HEK293 (cell line): ENCODE measurements at regions of chr12 and their contacts with region 1.

Region 1: DNA sequence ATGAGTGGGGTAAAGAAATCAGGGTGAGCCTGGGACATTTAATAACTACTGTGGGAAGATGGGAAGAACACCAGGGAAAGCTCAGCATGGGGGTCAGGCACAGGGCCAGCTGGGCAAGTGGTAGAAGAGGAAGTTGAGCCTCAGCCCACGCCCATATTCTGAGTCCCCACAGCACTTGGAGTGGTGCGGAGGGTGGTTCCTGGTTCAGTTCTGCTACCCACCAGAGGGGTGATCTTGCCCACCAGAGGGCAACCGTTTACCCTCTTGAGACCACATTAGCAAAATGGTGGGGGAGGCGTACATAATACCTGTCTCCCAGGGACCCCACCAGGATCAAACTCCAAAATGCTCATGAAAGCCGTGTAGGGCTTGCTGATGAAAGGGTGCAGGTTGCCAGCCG is 16.8 kb upstream of the ANKRD33 start:
- H3K4me3 ChIP-seq: no peak overlapping the region
- H3K27ac ChIP-seq: no peak overlapping the region
- H3K4me1 ChIP-seq: no peaks in the 10 kb centered on the region
- CTCF ChIP-seq: no peak

Region 2: DNA sequence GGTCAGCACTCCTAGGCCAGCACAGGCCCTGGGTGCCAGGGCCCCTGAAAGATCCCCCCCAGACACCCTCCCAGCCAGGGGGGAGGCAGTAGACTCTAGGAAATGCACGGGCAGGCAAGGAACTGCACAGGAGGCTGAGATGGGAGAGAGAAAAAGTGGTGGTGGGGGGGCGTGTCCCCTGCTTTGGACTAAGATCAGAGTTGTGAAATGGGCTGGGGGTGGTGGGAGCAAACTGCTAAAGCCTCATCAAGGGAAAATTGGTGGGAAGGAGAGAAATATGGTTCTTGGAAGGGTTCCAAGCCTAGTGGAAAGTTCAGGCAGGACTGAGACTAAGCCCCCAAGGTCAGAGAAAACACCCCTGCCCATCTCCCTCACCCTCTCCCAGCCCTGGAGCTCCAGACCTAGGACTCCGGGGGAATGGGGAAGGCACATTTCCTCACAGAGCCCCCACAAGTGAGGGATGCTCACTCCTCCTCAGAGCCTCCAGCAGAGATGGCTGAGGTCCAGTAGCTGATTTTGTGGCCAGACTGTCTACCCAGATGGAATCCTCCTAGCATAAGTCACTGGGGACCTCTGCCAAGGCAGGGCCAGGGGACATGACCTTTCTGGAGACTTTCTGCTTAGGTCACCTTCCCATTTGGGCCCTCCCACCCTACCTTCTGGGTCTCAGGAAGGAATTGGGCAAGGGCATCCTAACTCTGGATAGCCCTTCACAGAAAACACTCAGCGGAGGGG is 52.4 kb before region 1 on chr12:
- CTCF ChIA-PET with region 1: interaction called, 41 read pairs
- POLR2A ChIA-PET with region 1: no interaction called
- H3K4me3 ChIP-seq: no peak overlapping the region
- H3K27ac ChIP-seq: no peak overlapping the region
- H3K4me1 ChIP-seq: no peaks in the 10 kb centered on the region
- CTCF ChIP-seq: no peak

Region 3: DNA sequence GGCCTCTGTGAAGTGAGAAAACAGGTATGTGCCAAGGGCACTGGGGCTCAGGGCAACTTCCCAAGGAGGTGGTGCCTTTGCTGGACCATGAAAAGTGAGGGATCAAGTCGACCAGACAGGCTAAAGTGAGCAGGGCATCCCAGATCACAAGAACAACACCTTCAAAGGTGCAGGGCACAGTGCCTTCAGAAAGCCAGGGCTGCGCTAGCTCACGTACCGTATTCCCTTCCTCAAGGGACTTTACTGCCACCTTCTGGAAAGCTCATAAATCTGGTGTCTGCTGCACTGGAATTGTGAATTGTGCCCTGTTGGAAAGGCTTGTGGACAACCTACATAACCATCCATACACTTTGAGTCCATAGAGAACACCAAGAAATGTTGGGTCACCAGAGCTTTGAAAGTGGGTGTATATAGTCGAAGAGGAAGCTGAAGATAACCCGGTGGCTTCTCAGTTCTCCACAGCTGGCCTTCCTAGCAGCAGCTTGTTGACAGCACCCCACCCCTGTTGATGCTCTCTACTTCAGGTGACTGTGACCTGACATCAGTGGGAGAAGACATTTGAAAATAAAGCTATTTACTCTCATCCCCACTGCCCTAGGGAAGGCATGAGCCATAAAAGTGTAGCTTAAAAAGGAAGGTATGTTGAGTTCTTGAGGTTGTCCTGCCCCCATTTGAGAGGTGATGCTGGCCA is 47.1 kb before region 1 on chr12:
- CTCF ChIA-PET with region 1: interaction called, 41 read pairs
- POLR2A ChIA-PET with region 1: no interaction called
- H3K4me3 ChIP-seq: no peak overlapping the region
- H3K27ac ChIP-seq: no peak overlapping the region
- H3K4me1 ChIP-seq: no peaks in the 10 kb centered on the region
- CTCF ChIP-seq: peak; percentile 52; the same call in 1 of the 2 replicates

Region 4: GRCh38 chr12:51886021-51886322 is 14.8 kb after region 1 on chr12:
- CTCF ChIA-PET with region 1: interaction called, 15 read pairs
- POLR2A ChIA-PET with region 1: no interaction called
- H3K4me3 ChIP-seq: no peak overlapping the region
- H3K27ac ChIP-seq: no peak overlapping the region
- H3K4me1 ChIP-seq: no peaks in the 10 kb centered on the region
- CTCF ChIP-seq: no peak